Endothelial cell of umbilical vein (primary cell): ENCODE measurements at regions of chr1 and their contacts with region 1.

Region 1: DNA sequence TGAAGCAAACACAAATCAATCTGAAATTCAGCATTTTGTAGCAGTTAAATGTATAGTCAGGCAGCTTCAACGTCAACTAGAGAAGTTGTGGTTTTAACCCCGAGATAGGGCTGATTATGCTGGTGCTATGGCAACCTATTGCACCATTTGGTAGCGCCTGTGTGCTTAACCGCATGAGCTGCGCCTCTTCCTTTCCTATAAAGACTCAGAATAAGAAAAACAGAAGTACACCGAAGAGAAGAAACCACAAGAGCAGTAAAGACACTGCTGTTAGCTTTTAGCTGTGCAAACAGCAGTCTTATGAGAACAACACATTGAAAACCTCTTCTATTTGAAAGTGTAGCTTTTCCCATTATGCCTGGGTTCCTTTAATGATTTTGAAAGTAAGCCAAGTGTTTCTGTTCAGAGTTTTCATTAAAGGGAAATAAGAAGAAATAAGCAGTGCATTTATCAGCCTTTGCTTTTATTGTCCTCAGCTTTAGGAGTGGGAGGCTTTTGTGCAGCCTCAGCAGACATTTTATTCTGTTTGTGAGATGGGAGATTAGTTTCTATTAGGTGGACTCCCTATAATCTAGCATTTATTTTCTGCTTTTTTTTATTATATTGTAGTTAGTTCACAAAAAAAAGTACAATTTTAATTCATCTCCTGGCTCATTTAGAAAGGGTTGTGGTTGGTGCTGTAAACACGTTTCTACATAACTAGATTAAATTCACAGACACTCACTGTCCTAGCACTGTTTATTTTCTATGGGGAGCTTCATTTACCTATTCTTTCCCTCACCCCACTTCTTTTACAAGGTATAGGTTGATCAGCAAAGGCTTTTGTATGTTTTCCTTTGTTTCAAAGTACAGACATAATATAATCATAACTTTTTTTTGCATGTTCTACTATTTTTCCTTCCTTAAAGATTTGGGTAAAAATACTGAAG is 43.3 kb downstream of the PTPRC start:
- DNase-seq: peak; percentile 76
- H3K4me3 ChIP-seq: peak overlapping the region in 1 of 3 experiments; percentile 17
- H3K27ac ChIP-seq: peak overlapping the region; percentile 14
- H3K4me1 ChIP-seq: peaks cover 9% of the 10 kb centered on the region
- H3K27me3 ChIP-seq: no peaks in the 10 kb centered on the region
- CTCF ChIP-seq: no peak
- POLR2A ChIP-seq: no peak

Region 2: GRCh38 chr1:197521118-197521739 is 1160.9 kb before region 1 on chr1:
- CTCF ChIA-PET with region 1: interaction called, 29 read pairs
- POLR2A ChIA-PET with region 1: no interaction called
- dilution Hi-C with region 1: no loop called
- intact Hi-C with region 1: loop called (anchors 2 kb)
- DNase-seq: peak; percentile 46
- H3K4me3 ChIP-seq: no peak overlapping the region
- H3K27ac ChIP-seq: no peak overlapping the region
- H3K4me1 ChIP-seq: no peaks in the 10 kb centered on the region
- H3K27me3 ChIP-seq: no peaks in the 10 kb centered on the region
- CTCF ChIP-seq: peak; percentile 39 to 51
- POLR2A ChIP-seq: no peak

Region 3: GRCh38 chr1:197868751-197869489 is 813.2 kb before region 1 on chr1:
- CTCF ChIA-PET with region 1: interaction called, 21 read pairs
- POLR2A ChIA-PET with region 1: no interaction called
- dilution Hi-C with region 1: no loop called
- intact Hi-C with region 1: no loop called
- DNase-seq: peak; percentile 56
- H3K4me3 ChIP-seq: no peak overlapping the region
- H3K27ac ChIP-seq: no peak overlapping the region
- H3K4me1 ChIP-seq: no peaks in the 10 kb centered on the region
- H3K27me3 ChIP-seq: no peaks in the 10 kb centered on the region
- CTCF ChIP-seq: peak; percentile 54 to 59
- POLR2A ChIP-seq: no peak

Region 4: DNA sequence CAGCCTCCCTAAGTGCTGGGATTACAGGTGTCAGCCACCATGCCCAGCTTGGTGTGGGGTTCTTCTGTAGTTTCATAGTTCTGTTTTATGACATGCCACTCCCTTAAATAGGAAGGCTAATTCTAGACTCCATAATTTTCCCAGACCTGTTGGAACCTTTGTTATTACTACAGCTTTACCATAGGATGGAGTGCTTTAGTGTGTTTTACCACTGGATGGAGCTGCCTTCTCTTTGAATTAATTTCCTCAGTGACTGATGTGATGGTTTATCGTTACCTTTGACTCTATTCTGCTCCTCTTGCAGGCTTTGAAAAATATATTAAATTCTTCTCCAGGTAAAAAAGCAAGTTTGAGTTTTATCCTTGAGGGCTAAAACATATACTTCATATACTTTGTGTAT is 609.9 kb before region 1 on chr1:
- CTCF ChIA-PET with region 1: interaction called, 17 read pairs
- POLR2A ChIA-PET with region 1: no interaction called
- dilution Hi-C with region 1: no loop called
- intact Hi-C with region 1: no loop called
- DNase-seq: peak; percentile 37
- H3K4me3 ChIP-seq: no peak overlapping the region
- H3K27ac ChIP-seq: no peak overlapping the region
- H3K4me1 ChIP-seq: no peaks in the 10 kb centered on the region
- H3K27me3 ChIP-seq: no peaks in the 10 kb centered on the region
- CTCF ChIP-seq: peak; percentile 4 to 26
- POLR2A ChIP-seq: no peak

Region 5: DNA sequence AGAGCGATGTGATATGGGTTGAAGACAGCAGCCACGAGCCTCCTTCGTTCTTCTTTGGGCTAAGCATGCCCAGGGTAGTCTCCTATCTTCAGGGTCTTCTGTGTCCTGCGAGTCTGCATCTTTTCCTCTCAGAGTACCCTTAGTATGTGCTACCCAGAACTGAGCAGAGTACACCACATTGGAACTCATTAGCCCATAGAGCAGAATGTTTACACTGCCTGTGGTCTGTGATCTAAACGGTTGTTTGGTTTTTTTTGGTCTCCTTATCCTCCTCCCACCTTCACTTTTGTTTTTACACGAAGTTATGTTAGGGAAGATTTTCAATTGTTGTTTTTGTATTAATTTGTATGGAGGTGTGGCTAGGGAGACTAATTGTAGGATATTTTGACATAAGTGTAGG is 398.9 kb before region 1 on chr1:
- CTCF ChIA-PET with region 1: interaction called, 5 read pairs
- POLR2A ChIA-PET with region 1: no interaction called
- dilution Hi-C with region 1: no loop called
- intact Hi-C with region 1: loop called (anchors 10 kb)
- DNase-seq: no peak
- H3K4me3 ChIP-seq: no peak overlapping the region
- H3K27ac ChIP-seq: no peak overlapping the region
- H3K4me1 ChIP-seq: no peaks in the 10 kb centered on the region
- H3K27me3 ChIP-seq: no peaks in the 10 kb centered on the region
- CTCF ChIP-seq: no peak
- POLR2A ChIP-seq: no peak

Region 6: DNA sequence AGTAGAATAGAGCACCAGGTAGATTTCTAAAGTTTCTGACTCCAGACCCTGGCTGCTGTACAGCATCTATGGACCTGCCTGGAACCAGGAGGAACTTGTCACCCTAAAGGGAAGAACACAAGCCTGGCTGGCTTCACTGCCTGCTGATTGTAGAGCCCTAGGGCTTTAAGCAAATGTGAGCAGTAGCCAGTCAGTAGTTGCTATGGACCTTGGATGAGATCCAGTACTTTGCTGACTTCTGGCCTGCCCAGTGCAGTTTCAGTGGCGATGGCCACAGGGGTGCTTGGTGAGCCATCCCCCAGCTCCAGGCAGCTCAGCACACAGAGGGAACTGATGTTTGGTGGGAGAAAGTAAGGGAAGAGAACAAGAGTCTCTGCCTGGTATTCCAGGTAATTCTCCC is 210.0 kb before region 1 on chr1:
- CTCF ChIA-PET with region 1: interaction called, 34 read pairs
- POLR2A ChIA-PET with region 1: no interaction called
- dilution Hi-C with region 1: no loop called
- intact Hi-C with region 1: no loop called
- DNase-seq: no peak
- H3K4me3 ChIP-seq: no peak overlapping the region
- H3K27ac ChIP-seq: no peak overlapping the region
- H3K4me1 ChIP-seq: no peaks in the 10 kb centered on the region
- H3K27me3 ChIP-seq: no peaks in the 10 kb centered on the region
- CTCF ChIP-seq: no peak
- POLR2A ChIP-seq: no peak

Region 7: DNA sequence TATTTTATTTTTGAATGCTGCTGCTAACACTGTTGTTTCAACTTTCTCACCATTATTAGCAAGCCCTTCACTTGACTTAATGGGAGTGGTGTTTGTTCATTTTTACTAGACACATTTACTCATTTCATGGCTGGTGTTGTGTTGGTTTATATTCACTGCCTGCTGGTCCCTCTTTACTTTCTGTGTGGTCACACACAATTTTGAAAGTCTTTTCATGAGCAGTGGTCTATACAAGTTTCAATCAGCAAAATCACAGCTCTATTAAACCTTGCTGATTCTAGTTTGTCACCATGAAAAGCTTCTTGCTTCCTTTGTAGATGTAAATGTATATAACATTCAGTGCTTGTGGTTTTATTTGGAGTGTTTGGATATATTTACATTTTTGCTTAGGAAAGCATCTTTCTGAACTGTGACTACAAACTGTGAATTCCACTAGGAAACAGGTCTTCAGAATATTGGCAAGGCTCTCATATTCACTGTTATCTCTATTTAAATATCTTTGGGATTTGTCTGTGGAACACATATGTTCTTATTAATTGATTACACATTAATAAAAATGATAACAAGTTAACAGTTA is 164.4 kb before region 1 on chr1:
- CTCF ChIA-PET with region 1: no interaction called
- POLR2A ChIA-PET with region 1: no interaction called
- dilution Hi-C with region 1: no loop called
- intact Hi-C with region 1: no loop called
- DNase-seq: no peak
- H3K4me3 ChIP-seq: no peak overlapping the region
- H3K27ac ChIP-seq: no peak overlapping the region
- H3K4me1 ChIP-seq: no peaks in the 10 kb centered on the region
- H3K27me3 ChIP-seq: no peaks in the 10 kb centered on the region
- CTCF ChIP-seq: no peak
- POLR2A ChIP-seq: no peak